A673 (cell line): ENCODE measurements at regions of chr3 and their contacts with region 1.

Region 1: DNA sequence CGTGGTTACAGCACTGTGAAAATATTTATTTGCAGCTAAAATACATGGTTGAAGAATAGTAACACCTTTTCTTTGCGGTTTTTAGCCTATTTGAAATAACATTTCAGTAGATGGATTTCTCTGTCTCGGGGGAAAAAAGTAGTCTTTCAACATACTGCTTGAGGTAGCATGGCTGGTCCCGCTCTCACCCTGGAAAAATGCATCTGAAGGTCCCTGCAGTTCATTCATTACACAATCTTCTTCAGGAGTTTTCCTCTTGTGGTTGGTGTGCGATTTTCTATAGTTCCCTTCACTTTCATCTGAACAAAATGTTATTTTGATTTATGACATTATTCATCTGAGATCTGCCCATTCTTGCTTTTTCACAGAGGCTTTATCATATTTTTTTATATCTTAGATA is 75.9 kb downstream of the STRIT1 start:
- DNase-seq: no peak
- H3K4me3 ChIP-seq: no peak overlapping the region
- H3K27ac ChIP-seq: no peak overlapping the region
- H3K4me1 ChIP-seq: no peaks in the 10 kb centered on the region
- H3K27me3 ChIP-seq: no peaks in the 10 kb centered on the region
- CTCF ChIP-seq: no peak

Region 2: GRCh38 chr3:155342344-155342743 is 124.8 kb after region 1 on chr3:
- CTCF ChIA-PET with region 1: no interaction called
- POLR2A ChIA-PET with region 1: interaction called, 13 read pairs
- intact Hi-C with region 1: no loop called
- DNase-seq: no peak
- H3K4me3 ChIP-seq: no peak overlapping the region
- H3K27ac ChIP-seq: no peak overlapping the region
- H3K4me1 ChIP-seq: no peaks in the 10 kb centered on the region
- H3K27me3 ChIP-seq: no peaks in the 10 kb centered on the region
- CTCF ChIP-seq: no peak

Region 3: DNA sequence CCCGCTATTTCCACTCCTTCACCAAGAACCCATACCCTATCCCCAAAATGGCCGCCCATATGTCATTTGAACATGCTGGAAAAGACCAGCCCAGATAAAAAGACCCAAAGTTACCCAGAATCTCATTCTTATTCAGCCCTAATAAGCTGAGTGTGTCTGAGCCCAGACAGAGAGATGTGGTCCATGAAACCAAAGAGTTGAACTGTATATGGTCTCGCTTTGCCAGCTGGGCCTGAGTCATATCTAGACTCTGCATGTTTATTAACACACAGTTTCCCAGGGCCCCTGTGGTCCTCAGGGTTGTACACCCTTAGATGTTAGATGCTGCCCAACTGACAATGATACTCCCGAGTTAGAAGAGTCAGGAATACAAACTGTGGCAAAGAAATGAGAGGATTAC is 277.8 kb after region 1 on chr3:
- CTCF ChIA-PET with region 1: no interaction called
- POLR2A ChIA-PET with region 1: no interaction called
- intact Hi-C with region 1: no loop called
- DNase-seq: no peak
- H3K4me3 ChIP-seq: no peak overlapping the region
- H3K27ac ChIP-seq: no peak overlapping the region
- H3K4me1 ChIP-seq: no peaks in the 10 kb centered on the region
- H3K27me3 ChIP-seq: no peaks in the 10 kb centered on the region
- CTCF ChIP-seq: no peak